Stomach (tissue), 19 donors: ENCODE measurements at regions of chr2 and their contacts with region 1.

Region 1: GRCh38 chr2:69565431-69565839 is 78.1 kb downstream of the AAK1 start:
- DNase-seq: peak; percentile 57 to 74
- H3K4me3 ChIP-seq: no peak overlapping the region
- H3K27ac ChIP-seq: peak overlapping the region in 1 of 5 donors; percentile 5
- H3K4me1 ChIP-seq: peaks cover 11 to 75% (median 37%) of the 10 kb centered on the region in 4 donors
- H3K27me3 ChIP-seq: no peaks in the 10 kb centered on the region
- CTCF ChIP-seq: peak in 5 of 7 experiments; percentile 44 to 68 (median 49)
- EP300 ChIP-seq: no peak
- POLR2A ChIP-seq: no peak

Region 2: DNA sequence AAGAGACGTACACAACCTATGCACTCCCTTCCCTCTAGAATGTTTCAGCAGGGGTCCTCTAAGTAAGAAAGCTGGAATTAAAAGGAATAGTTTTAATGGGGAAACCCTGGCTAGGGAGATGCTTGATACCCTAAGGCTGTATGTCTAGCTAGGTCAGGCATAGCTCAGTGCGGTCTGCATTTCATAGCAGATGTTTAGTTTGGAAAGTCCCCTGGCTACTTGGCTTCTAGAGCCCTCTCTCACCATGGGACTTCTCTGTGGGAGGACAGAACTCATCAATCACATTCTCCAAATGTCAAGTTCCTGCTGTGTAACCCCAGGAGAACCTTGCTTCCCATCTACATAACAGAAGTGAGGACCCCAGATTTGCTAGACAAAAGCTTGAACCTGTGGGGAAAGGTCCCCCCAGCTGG is 152.4 kb after region 1 on chr2:
- intact Hi-C with region 1: loop called (anchors 10 kb)
- DNase-seq: no peak
- H3K4me3 ChIP-seq: no peak overlapping the region
- H3K27ac ChIP-seq: no peak overlapping the region
- H3K4me1 ChIP-seq: peaks cover 0 to 9% (median 6%) of the 10 kb centered on the region in 4 donors
- H3K27me3 ChIP-seq: no peaks in the 10 kb centered on the region
- CTCF ChIP-seq: no peak
- EP300 ChIP-seq: no peak
- POLR2A ChIP-seq: no peak